Activated CD4-positive, alpha-beta T cell treated with anti-CD3 and anti-CD28 coated beads, Interleukin-2, amount 10 ng/mL, durations not matched to agents 7 days and 5 days (primary cell): ENCODE measurements at regions of chr17 and their contacts with region 1.

Region 1: DNA sequence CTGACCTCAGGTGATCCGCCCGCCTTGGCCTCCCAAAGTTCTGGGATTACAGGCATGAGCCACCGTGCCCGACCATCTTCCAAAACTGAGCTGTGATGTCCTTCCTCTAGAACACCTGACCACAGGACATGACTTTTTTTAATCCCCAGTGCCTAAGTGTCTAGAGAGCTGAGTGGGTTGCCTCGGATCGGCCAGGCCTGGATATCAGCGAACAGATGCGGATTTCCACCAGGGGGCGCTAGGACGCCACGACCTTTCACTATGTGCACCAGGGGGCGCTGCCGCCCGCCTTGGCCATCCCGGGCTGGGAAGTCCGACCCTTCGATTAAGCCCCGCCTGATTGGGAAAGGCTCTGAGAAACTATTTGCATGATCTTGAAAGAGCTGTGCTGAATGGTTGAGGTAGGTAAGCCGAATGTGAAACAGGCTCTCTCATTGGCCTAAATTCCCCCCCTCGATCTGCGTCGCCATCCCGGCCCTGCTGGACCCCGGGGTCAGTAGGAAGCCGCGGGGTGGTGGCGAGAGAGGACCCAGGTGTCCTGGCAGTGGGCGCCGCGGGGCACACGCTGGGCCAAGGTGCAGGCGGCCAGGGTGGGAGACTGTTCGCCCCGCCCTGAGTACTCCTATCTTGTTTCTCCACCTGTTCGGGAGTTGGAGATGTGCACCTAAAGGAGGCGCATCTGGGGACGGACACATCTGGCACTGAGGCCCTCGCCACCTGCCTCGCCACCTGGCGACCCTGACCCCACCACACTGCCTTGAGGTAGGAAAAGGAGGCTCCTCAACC is at the start of gene ACBD4:
- DNase-seq: peak; percentile 98
- H3K4me3 Mint-ChIP-seq: peak within 1 kb of the TSS; percentile 91
- H3K27ac Mint-ChIP-seq: peak within 1 kb of the TSS; percentile 86
- H3K4me1 Mint-ChIP-seq: peaks cover 17% of the 10 kb centered on the region
- H3K27me3 Mint-ChIP-seq: peaks cover 6% of the 10 kb centered on the region
- total RNA-seq, gene ACBD4: 18.4 to 19.7 TPM

Region 2: DNA sequence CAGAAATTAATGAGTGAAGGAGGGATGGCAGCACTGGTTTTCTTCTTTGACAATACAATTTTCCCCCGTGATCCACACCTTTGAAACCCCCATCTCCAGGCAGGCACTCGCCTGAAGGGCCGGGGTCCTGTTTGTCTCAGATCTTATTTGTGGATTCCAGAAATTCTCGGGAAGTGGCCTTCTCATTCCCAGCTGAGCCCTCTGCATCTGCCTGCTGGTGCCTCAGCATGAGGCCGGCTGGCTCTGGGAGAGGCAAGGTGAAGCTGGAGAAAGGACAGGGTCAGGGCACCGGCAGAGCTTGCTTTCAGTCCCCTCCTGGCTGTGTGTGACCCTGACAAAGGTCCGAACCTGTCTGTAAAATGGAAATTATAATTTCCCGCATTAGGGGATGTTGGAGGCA is 131.5 kb before region 1 on chr17:
- CTCF ChIA-PET with region 1: no interaction called
- POLR2A ChIA-PET with region 1: no interaction called
- DNase-seq: no peak
- H3K4me3 Mint-ChIP-seq: no peak overlapping the region
- H3K27ac Mint-ChIP-seq: no peak overlapping the region
- H3K4me1 Mint-ChIP-seq: no peaks in the 10 kb centered on the region
- H3K27me3 Mint-ChIP-seq: peaks cover 21% of the 10 kb centered on the region

Region 3: GRCh38 chr17:45051060-45051719 is 84.2 kb before region 1 on chr17 and contains the start of gene DCAKD:
- CTCF ChIA-PET with region 1: interaction called, 14 read pairs
- POLR2A ChIA-PET with region 1: no interaction called
- DNase-seq: peak; percentile 92
- H3K4me3 Mint-ChIP-seq: peak within 1 kb of the TSS; percentile 85
- H3K27ac Mint-ChIP-seq: peak within 1 kb of the TSS; percentile 97
- H3K4me1 Mint-ChIP-seq: peaks cover 54% of the 10 kb centered on the region
- H3K27me3 Mint-ChIP-seq: no peaks in the 10 kb centered on the region
- total RNA-seq, gene DCAKD: 36.5 to 38.6 TPM

Region 4: GRCh38 chr17:45098869-45099616 is 36.3 kb before region 1 on chr17:
- CTCF ChIA-PET with region 1: interaction called, 18 read pairs
- POLR2A ChIA-PET with region 1: no interaction called
- DNase-seq: peak; percentile 81
- H3K4me3 Mint-ChIP-seq: no peak overlapping the region
- H3K27ac Mint-ChIP-seq: peak overlapping the region; percentile 57
- H3K4me1 Mint-ChIP-seq: no peaks in the 10 kb centered on the region
- H3K27me3 Mint-ChIP-seq: no peaks in the 10 kb centered on the region

Region 5: DNA sequence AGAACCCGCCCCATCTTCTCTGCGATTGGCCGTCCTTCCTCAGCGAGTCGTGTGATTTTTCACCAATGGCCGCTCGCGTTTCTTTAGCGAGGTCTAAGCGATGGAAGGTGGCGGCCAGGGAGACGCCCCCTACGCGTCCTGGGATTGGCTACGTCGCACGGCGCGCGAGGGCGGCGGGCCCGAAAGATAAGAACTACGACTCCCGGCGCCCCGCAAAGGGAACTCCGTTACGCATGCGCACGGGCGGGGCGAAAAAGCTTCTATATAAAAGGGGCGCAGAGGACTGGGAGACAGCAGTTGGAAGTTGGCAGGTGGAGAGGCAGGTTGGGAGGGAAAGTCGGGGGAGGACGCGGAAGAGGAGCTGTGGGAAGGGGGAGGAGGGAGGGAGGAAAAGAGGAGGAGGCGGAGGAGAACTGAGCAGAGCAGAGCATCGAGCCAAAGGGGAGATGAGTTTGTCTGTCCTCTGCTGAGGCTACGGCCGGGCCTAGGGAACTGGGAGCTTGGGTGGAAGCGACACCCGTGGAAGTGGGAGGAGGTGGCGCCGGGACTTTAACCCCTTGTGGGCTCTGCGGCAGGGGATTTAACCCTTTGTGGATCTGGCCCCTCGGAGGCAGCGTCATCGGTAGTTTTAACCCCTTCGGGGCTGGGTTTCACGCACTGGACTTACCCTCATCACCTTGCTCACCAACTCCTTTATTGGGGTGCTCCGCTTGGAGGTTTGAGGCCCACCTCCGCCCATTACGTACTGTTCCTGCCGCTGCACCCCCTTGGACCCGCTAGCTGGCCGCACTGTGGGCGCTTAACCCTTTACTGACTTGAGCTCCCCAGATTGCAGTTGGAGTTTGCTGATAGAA is 13.0 kb after region 1 on chr17 and contains the start of gene HEXIM1:
- CTCF ChIA-PET with region 1: interaction called, 203 read pairs
- POLR2A ChIA-PET with region 1: interaction called, 5 read pairs
- DNase-seq: peak; percentile 99
- H3K4me3 Mint-ChIP-seq: peak within 1 kb of the TSS; percentile 98
- H3K27ac Mint-ChIP-seq: peak within 1 kb of the TSS; percentile 100
- H3K4me1 Mint-ChIP-seq: peaks cover 56% of the 10 kb centered on the region
- H3K27me3 Mint-ChIP-seq: no peaks in the 10 kb centered on the region
- total RNA-seq, gene HEXIM1: 30.5 TPM

Region 6: GRCh38 chr17:45190503-45191255 is 55.3 kb after region 1 on chr17:
- CTCF ChIA-PET with region 1: interaction called, 105 read pairs
- POLR2A ChIA-PET with region 1: no interaction called
- DNase-seq: no peak
- H3K4me3 Mint-ChIP-seq: no peak overlapping the region
- H3K27ac Mint-ChIP-seq: no peak overlapping the region
- H3K4me1 Mint-ChIP-seq: no peaks in the 10 kb centered on the region
- H3K27me3 Mint-ChIP-seq: no peaks in the 10 kb centered on the region

Region 7: DNA sequence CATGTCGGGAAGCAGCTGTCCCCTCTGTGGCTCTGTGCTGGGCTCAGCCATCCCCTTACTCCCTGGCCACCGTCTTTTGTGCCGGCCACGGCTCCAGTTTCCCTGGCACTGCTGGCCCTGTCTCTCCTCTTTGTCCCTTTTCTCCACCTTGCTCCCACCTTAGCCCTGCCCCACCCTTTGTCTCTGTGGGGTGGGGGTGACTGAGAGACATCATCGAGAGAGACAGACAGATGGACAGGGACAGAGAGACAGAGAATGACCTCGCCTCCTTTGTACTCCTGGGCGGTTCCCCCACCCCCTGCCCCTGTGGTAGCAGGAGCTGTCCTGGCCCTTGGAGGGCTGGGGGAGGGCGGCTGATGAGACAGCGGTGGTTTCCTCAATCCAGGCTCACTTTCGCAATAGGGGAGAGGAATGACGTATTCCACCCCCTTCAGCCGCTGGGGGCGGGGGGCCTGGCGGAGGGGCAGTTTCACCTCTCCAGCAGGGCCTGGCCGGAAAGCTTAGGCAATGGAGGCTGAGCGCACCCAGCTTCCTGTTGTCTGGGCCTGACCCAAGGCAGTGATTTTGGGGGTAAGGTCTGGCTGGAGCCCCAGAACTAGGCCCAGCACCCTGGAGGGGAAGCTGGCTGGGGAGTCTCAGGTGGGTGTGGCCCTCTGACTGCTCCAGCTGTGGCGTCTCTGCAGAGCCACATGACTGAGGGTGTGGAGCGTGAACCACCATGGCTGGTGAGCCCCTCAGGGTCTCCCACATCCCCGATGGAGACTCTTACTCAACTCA is 93.6 kb after region 1 on chr17:
- CTCF ChIA-PET with region 1: interaction called, 44 read pairs
- POLR2A ChIA-PET with region 1: no interaction called
- DNase-seq: peak; percentile 68
- H3K4me3 Mint-ChIP-seq: peak overlapping the region; percentile 97
- H3K27ac Mint-ChIP-seq: peak overlapping the region; percentile 100
- H3K4me1 Mint-ChIP-seq: peaks cover 84% of the 10 kb centered on the region
- H3K27me3 Mint-ChIP-seq: no peaks in the 10 kb centered on the region

Region 8: DNA sequence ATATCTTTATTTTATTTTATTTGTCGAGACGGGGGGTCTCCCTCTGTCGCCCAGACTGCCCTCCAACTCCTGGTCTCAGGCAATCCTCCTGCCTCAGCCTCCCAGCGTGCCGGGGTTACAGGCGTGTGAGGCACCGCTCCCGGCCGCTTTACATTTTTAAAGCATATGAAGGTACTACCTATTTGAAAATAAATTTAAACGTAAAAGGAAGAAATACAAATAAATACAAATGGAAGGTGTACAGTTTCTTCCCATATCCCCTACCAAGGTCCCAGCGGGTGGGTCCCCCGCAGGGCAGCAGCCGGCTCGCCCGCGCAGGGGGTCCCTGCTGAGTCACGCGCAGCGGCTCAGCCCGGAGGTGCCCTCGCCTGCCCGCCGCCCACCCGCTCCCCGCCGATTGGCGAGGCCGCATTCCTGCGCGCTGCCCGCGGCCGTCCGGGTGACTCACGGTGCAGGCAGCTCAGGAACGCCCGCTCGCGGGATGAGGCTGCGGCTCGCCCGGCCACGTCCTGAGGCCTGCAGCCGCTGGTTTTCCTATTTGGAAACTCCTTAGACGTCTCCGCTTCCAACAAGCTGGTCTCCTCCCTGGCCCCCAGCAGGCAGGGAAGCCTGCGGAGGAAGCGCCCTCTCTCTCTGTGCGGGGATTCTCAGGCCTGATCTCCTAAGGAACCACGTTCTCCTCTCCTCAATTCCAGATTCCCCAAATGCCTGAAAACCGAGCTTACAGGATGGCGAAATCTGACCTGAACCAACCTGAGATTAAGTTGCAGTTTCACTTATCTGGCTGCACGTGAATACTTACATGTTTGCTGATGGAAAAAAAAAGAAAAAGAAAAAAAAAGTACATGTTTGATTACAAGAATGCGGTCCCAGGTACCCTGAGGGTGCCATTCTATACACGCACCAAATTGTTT is 236.3 kb after region 1 on chr17:
- CTCF ChIA-PET with region 1: no interaction called
- POLR2A ChIA-PET with region 1: no interaction called
- DNase-seq: no peak
- H3K4me3 Mint-ChIP-seq: peak overlapping the region; percentile 43
- H3K27ac Mint-ChIP-seq: peak overlapping the region; percentile 34
- H3K4me1 Mint-ChIP-seq: peaks cover 15% of the 10 kb centered on the region
- H3K27me3 Mint-ChIP-seq: peaks cover 18% of the 10 kb centered on the region

Region 9: DNA sequence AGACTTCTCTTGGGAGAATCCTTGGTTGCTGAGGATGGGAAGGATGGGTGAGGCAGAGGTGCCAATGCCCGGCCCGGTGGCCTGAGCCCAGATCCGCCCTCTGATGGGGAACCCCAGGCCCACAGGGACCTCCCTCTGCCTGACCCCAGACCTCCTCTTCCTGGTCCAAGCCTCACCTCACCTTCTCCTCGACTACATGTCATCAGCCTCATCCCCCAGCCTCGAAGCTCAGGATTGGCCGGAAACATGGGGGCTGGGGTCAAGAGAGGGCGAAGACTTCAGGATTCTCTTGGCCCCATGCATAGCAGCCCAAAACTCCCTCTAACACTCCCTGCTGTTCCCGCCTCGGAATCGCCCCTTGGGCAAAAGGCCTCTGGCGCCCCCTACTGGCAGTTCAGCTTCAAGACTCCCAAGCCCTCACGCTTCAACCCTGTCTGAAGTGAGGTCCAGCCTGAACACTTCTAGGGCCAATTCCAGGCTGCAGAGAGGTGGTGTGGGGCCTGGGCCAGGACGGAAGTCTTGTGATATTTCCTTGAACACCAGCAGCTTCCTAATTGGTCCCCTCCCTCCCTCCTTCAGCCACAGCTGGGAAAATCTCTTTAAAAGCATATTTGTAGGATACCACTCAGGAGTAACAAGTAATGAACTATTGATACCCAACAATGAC is 250.1 kb after region 1 on chr17:
- CTCF ChIA-PET with region 1: interaction called, 13 read pairs
- POLR2A ChIA-PET with region 1: no interaction called
- DNase-seq: peak; percentile 91
- H3K4me3 Mint-ChIP-seq: no peak overlapping the region
- H3K27ac Mint-ChIP-seq: peak overlapping the region; percentile 80
- H3K4me1 Mint-ChIP-seq: peaks cover 20% of the 10 kb centered on the region
- H3K27me3 Mint-ChIP-seq: peaks cover 14% of the 10 kb centered on the region